ENCODE measurements at regions of chr7 and their contacts with region 1.

Region 1: GRCh38 chr7:4610768-4611467 is 71.2 kb upstream of the FOXK1 start:
- DNase-seq: peak; percentile 39
- ATAC-seq: peak; percentile 91
- H3K4me3 ChIP-seq: no peak overlapping the region
- H3K27ac ChIP-seq: no peak overlapping the region
- H3K4me1 ChIP-seq: peaks cover 7% of the 10 kb centered on the region
- H3K27me3 ChIP-seq: no peaks in the 10 kb centered on the region; a peak in 1 of 4 replicates
- CTCF ChIP-seq: peak; percentile 77 to 85 (median 78)
- EP300 ChIP-seq: no peak
- POLR2A ChIP-seq: no peak
- RAD21 ChIP-seq: peak; percentile 92

Region 2: GRCh38 chr7:4631664-4632171 is 20.8 kb after region 1 on chr7:
- CTCF ChIA-PET with region 1: no interaction called
- POLR2A ChIA-PET with region 1: no interaction called
- RAD21 ChIA-PET with region 1: no interaction called
- SMC1A ChIA-PET with region 1: no interaction called
- in situ Hi-C with region 1: no loop called
- intact Hi-C with region 1: no loop called
- DNase-seq: no peak
- ATAC-seq: no peak
- H3K4me3 ChIP-seq: no peak overlapping the region
- H3K27ac ChIP-seq: no peak overlapping the region
- H3K4me1 ChIP-seq: no peaks in the 10 kb centered on the region
- H3K27me3 ChIP-seq: no peaks in the 10 kb centered on the region
- CTCF ChIP-seq: peak in 1 of 3 experiments; percentile 8; a peak in 1 of 6 replicates
- EP300 ChIP-seq: no peak
- POLR2A ChIP-seq: no peak
- RAD21 ChIP-seq: no peak

Region 3: DNA sequence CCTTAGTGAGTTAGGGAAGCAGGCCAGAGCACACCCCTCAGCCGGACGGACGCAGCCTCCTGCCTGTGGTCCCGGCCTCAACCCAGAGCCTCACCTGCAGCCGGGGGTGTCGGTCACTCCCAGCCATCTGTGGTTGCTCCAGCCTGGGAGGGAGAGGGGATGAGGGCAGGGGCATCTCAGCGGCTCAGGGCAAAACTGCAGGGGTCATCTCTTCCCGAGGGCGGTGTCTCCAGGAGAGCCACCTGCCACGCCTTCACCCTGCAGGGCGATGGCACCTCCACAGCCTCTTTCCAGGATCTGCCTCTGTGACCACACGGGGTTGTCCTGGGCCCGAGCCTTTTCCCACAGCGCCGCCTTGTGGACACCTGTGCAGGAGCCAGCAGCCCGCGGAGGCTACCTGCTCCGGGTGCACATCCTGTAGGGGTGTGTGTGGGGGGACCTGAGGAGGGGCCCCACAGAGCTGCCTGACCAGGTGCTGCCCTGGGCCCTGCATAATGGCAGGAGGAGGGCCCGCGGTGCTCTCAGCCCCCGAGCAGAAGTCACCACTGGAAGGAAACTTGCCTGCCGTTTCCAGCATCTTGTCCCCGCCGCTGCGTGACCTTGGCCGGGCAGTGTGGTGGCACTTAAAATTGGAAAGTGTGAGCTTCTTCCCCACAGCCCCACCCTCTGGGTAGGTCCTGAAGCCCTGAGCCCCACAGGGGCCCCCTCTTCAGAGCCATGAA is 143.0 kb after region 1 on chr7:
- CTCF ChIA-PET with region 1: interaction called, 5 read pairs
- POLR2A ChIA-PET with region 1: no interaction called
- RAD21 ChIA-PET with region 1: no interaction called
- SMC1A ChIA-PET with region 1: no interaction called
- in situ Hi-C with region 1: no loop called
- intact Hi-C with region 1: loop called (anchors 1 kb)
- DNase-seq: no peak
- ATAC-seq: peak; percentile 99
- H3K4me3 ChIP-seq: no peak overlapping the region
- H3K27ac ChIP-seq: no peak overlapping the region
- H3K4me1 ChIP-seq: peaks cover 14% of the 10 kb centered on the region
- H3K27me3 ChIP-seq: no peaks in the 10 kb centered on the region
- CTCF ChIP-seq: peak; percentile 91 to 97 (median 94)
- EP300 ChIP-seq: no peak
- POLR2A ChIP-seq: no peak
- RAD21 ChIP-seq: peak; percentile 98

Region 4: DNA sequence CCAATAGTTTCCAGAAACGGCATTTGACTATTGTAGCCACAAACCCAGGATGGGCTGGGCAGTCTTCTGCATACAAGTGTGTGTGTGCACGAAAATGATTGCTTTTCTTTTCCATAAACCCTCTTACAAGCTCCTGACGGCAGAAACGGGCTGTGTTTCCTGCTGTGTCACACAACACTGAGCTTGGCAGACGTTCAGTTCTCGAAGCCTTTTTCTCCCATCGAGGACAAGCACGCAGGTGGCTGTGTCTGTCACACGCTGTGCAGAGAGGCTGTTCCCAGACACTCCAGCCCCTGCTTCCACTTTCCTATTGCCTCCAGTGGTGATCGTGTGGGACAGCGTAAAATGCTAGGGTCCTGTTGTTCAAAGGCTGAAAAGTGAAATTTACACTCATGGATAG is 466.8 kb after region 1 on chr7:
- CTCF ChIA-PET with region 1: no interaction called
- POLR2A ChIA-PET with region 1: no interaction called
- RAD21 ChIA-PET with region 1: no interaction called
- SMC1A ChIA-PET with region 1: no interaction called
- in situ Hi-C with region 1: loop called (anchors 25 kb)
- intact Hi-C with region 1: no loop called
- DNase-seq: no peak
- ATAC-seq: no peak
- H3K4me3 ChIP-seq: no peak overlapping the region
- H3K27ac ChIP-seq: no peak overlapping the region
- H3K4me1 ChIP-seq: no peaks in the 10 kb centered on the region
- H3K27me3 ChIP-seq: no peaks in the 10 kb centered on the region
- CTCF ChIP-seq: no peak
- EP300 ChIP-seq: no peak
- POLR2A ChIP-seq: no peak
- RAD21 ChIP-seq: no peak

Measured in GM12878 (cell line).